ENCODE measurements at regions of chr11 and their contacts with region 1.

Region 1: DNA sequence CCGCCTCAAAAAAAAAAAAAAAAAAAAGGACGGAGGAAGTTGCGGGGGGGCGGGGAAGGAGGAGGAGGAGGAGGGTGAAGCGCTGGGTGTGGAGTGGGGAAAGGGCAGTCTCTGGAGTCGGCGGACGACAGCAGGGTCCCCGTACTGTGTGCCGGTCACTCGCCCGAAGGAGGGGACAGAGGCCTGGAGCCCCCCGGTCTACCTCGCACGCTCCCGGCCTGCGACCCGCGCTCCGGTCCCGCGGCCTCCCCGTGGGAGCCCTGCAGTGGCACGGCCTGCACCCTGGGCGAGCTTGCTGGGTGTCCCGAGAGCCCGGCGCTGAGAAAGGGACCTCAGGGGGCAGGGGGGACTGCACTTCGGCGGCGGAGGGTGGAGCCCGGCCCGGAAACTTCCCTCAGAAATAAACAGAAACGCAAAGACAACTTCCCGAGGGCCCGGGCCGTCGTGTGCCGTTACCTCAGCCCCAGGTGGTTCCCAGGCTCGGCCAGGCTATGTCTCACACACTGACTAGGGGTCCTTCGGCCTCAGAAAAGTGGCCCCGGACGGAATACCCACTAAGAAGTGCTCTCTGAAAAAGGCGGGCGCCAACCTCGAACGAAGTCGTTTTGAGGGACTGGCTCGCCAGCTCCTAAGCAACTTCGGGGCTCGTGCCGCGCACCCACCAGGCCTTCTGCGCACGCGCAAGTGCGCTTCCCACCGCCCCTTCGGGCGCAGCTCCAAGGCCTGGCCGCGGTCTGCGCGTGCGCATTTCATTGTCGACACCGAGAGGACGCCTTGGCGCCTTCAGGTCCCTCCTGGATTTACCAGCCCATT is at the start of gene MAJIN:
- DNase-seq: no peak
- H3K4me3 ChIP-seq: no peak within 1 kb of the TSS
- H3K27ac ChIP-seq: peak within 1 kb of the TSS; percentile 93
- H3K4me1 ChIP-seq: peaks cover 59% of the 10 kb centered on the region
- CTCF ChIP-seq: no peak
- total RNA-seq, gene MAJIN: not detected in 2 replicates

Region 2: DNA sequence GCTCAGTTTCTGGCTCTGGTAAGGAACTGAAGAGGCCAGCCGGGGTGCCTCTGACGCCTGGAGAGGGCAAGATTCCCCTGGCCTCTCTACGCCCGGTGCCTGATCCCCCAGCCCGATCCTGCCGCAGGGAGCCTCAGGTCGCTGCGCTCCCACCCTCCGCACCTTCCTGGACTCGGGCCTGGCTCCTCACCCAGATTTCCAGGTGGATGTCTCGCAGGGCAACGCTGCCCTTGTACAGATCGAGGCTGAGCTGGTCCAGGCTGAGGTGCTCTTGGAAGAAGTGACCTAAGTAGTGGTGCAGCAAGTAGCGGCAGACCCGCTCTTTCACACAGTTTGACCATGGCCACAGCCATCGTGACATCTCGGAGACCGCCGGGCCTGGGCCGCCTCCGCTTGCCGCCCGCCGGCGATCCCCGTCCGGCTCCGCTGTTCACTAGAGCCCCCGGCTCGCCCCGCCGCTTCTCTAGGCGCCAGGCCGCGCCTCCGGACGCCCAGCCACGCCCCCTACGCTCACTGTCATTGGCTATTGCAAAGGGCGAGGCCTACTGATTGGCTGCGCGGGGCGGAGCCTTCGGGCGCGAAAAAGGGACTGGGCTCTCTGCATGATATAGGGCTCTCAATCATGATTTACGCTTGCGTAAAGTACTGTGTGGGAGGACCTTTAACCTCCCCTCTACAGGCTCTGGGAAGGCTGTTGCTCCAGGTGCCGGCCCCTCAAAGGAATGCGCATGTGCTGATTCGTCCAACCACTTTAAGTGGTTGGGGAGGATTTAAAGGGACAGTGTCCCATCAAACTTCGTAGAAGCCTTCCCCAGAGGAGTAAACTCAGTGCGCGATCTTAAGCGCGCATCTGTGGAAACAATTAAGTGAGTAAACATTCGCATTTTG is 54.6 kb before region 1 on chr11 and contains the start of gene ATG2A:
- CTCF ChIA-PET with region 1: interaction called, 3 read pairs
- POLR2A ChIA-PET with region 1: interaction called, 3 read pairs
- intact Hi-C with region 1: loop called (anchors 5 kb)
- DNase-seq: peak; percentile 100
- H3K4me3 ChIP-seq: peak within 1 kb of the TSS; percentile 87
- H3K27ac ChIP-seq: peak within 1 kb of the TSS; percentile 63
- H3K4me1 ChIP-seq: peaks cover 32% of the 10 kb centered on the region
- CTCF ChIP-seq: no peak
- total RNA-seq, gene ATG2A: 18.1 and 29.0 TPM in 2 replicates